ENCODE measurements at regions of chr11 and their contacts with region 1.

Region 1: DNA sequence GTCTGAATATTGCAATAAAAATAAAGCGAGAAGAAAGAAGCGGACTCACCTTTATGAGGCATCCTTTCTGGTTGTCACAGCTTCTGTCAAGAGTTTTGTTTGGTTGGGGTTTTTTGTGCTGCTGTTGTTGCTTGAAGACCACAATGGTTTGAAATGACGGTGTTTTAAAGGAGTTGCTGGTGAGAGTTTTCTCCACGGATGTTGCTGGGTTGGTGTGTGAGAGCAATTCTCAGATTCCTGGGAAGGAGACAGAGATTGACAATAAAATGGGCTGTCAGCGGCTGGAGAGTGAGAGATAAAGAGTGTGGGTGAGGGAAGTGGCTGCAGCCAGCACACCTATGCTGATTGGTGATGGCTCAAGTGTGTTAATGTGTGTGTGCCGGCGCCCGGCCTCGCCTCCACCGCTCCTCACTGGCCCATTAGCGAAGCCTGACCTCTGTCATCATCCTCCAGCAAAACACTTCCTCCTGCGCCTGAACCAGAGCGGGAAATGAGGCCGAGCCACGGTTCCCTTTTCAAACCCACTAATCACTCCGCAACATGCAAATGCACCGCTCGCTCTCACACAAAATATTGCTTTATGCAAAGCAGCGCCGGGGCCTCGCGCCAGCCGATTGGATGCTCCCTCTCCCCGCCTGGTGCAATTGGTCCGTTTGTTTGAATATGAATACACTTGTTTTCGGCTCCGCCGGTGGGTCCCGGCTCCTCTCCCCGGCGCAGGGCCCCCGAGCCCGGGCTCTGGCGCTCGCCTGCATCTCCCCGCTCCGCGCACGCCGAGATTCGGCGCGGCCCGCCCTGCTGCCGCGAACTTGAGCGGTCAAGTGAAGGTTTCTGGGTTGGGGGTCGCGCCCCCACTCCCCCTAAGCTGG is at the start of gene PAX6:
- DNase-seq: peak; percentile 95 to 98
- H3K4me3 ChIP-seq: peak within 1 kb of the TSS; percentile 89
- H3K27ac ChIP-seq: peak within 1 kb of the TSS; percentile 77
- H3K4me1 ChIP-seq: peaks cover 28% of the 10 kb centered on the region
- H3K27me3 ChIP-seq: no peaks in the 10 kb centered on the region
- CTCF ChIP-seq: 0 out of 2 replicates have a peak, but pooled peaks have one; percentile 16
- total RNA-seq, gene PAX6: 19.8 and 29.0 TPM in 2 replicates

Region 2: GRCh38 chr11:31509429-31510345 is 301.3 kb before region 1 on chr11 and contains the starts of genes ELP4 and IMMP1L:
- CTCF ChIA-PET with region 1: interaction called, 4 read pairs
- POLR2A ChIA-PET with region 1: no interaction called
- intact Hi-C with region 1: loop called (anchors 2 kb)
- DNase-seq: peak; percentile 95 to 96
- H3K4me3 ChIP-seq: peak within 1 kb of the TSS; percentile 86
- H3K27ac ChIP-seq: peak within 1 kb of the TSS; percentile 41
- H3K4me1 ChIP-seq: peaks cover 32% of the 10 kb centered on the region
- H3K27me3 ChIP-seq: no peaks in the 10 kb centered on the region
- CTCF ChIP-seq: no peak
- total RNA-seq, gene ELP4: 15.1 and 20.5 TPM in 2 replicates
- total RNA-seq, gene IMMP1L: 37.8 and 41.9 TPM in 2 replicates

Region 3: DNA sequence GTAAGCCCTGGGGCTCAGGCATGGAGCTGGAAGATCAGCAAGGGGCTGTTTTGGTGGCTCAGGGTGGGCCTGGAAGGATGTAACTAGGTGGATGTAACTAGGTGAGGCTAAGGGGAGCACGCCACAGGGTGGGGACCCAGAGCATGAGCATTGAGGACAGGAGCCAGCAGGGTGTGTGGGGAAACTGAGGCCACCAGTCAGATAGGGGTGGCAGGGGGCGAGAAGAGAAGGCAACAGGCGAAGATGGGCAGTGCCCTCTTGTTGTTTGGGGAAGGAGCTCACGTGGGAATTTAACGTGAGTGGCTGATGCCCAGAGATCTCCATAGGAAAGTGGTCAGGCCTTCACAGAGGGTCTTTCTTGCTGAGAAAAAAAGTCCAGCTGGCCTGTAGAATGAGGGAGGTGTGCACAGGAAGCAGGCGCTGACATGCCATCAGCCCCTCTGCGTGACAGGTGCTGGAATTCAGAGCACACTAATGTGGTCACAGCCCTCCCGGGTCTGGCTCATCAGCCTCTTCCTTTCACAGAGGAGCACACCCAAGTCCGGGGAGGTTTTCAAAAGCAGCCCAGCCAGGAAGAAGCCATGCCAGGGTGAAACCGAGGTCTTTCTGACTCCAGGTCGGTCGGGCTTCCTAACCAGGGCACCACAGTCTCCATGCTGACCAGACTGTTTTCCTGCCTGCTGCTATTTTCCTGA is 54.7 kb after region 1 on chr11:
- CTCF ChIA-PET with region 1: interaction called, 16 read pairs
- POLR2A ChIA-PET with region 1: no interaction called
- intact Hi-C with region 1: loop called (anchors 2 kb)
- DNase-seq: no peak
- H3K4me3 ChIP-seq: no peak overlapping the region
- H3K27ac ChIP-seq: no peak overlapping the region
- H3K4me1 ChIP-seq: peaks cover 34% of the 10 kb centered on the region
- H3K27me3 ChIP-seq: no peaks in the 10 kb centered on the region
- CTCF ChIP-seq: no peak

Region 4: DNA sequence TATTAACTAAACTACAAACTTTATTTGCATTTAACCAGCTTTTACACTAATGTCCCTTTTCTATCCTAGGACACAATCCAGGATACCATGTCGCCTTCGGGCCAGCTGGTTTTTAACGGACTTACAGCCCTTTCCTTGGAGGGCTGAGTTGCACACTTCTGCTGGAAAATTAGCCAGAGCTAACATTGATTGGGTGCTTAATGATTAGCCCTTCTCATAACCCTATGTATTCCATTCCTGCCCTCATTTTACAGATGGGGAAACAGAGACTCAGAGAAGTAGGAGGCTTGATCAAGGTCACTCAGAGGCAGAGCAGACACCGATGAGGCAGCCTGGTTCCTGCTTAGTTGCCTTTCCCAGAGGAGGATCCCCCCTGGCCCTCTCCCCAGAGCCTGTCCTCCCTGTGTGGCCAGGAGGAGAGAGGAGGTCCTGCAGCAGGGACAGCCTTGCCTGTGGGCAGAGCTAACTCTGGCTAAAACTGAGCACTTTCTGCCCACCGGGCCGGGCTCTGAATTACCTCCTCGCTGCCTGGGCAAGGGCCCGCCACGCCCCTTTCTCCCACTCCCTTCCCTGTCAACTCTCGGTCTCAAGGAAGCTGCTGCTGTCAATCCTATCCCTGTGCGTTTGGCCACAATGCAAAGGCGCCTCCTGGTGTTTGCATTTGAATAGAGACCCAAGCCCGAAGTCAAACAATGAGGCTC is 59.7 kb after region 1 on chr11:
- CTCF ChIA-PET with region 1: no interaction called
- POLR2A ChIA-PET with region 1: no interaction called
- intact Hi-C with region 1: loop called (anchors 2 kb)
- DNase-seq: peak; percentile 48 to 50
- H3K4me3 ChIP-seq: no peak overlapping the region
- H3K27ac ChIP-seq: peak overlapping the region; percentile 93
- H3K4me1 ChIP-seq: peaks cover 84% of the 10 kb centered on the region
- H3K27me3 ChIP-seq: no peaks in the 10 kb centered on the region
- CTCF ChIP-seq: peak; percentile 71

Region 5: DNA sequence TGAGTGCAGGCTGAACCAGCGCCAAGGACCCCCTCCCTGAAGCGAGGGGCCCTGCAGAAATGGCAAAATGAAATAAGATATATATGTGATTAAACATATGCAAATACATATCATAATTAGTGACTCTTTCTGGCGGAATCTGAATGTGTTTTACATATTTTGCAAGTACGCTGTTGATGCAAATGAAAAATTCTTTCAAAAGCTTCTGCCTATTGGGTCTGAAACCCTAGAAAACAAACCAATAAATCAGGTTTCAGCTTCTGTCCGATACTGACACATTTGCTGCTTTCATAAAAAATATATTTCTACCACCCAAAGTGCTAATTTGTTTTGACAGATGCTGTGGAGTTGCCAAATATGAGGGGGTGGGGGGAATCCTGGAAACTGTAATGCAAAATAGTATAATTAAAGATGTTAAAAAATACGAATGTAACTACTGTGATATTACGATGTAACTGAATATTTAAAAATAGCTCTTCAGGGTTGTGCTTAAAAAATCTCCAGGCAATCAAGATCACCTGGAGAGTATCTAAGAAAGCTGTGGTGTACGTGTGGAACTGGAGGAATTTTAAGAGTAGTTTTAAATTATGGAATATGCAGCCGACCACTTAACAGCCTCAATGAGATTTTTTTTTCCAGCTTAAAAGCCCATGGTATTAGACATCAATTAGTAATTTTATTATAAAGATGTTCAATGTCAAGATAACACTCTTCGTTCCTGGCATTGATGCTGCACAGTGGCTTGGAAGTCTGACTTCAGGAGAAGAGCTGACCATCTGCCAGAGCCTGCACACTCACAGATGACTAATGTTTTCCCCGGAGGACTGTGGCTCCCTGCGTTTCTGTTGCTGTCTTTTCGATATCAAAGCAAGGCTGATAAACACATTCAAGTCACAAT is 157.7 kb after region 1 on chr11:
- CTCF ChIA-PET with region 1: no interaction called
- POLR2A ChIA-PET with region 1: no interaction called
- intact Hi-C with region 1: no loop called
- DNase-seq: no peak
- H3K4me3 ChIP-seq: no peak overlapping the region
- H3K27ac ChIP-seq: no peak overlapping the region
- H3K4me1 ChIP-seq: no peaks in the 10 kb centered on the region
- H3K27me3 ChIP-seq: no peaks in the 10 kb centered on the region
- CTCF ChIP-seq: no peak

Region 6: DNA sequence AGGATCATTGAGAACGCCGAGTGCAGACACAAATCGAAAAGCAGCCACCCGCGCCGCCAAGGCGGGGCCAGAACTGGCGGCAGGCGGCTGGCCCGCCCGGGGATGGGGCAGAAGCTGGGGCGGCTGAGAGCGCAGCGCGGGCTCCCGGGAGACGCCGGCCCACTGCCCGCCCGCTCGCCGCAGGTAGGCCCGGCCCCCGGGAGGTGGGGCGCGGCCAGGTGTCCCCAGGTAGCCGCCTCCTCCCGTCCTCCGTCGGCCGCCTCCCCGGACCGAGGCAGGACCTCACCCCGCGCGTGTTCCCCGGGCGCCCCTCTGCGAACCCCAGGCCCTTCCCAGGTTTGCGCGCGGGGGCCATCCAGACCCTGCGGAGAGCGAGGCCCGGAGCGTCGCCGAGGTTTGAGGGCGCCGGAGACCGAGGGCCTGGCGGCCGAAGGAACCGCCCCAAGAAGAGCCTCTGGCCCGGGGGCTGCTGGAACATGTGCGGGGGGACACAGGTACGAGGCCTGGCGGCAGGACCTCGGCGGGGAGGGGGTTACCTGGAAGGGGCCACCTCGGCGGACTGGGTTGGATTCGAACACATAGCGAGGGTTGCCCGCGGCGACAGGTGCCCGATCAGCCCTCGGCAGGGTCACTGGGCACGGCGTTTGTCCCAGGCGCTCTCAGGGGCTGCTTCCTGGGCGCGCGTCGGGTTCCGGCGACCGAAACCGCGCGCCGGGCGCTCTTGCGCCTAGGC is 1018.8 kb after region 1 on chr11 and contains the start of gene PRRG4:
- CTCF ChIA-PET with region 1: no interaction called
- POLR2A ChIA-PET with region 1: no interaction called
- intact Hi-C with region 1: no loop called
- DNase-seq: peak; percentile 77 to 95
- H3K4me3 ChIP-seq: peak within 1 kb of the TSS; percentile 72
- H3K27ac ChIP-seq: peak within 1 kb of the TSS; percentile 57
- H3K4me1 ChIP-seq: peaks cover 14% of the 10 kb centered on the region
- H3K27me3 ChIP-seq: no peaks in the 10 kb centered on the region
- CTCF ChIP-seq: no peak
- total RNA-seq, gene PRRG4: 11.5 and 11.9 TPM in 2 replicates